ENCODE measurements at regions of chr1 and their contacts with region 1.

Region 1: DNA sequence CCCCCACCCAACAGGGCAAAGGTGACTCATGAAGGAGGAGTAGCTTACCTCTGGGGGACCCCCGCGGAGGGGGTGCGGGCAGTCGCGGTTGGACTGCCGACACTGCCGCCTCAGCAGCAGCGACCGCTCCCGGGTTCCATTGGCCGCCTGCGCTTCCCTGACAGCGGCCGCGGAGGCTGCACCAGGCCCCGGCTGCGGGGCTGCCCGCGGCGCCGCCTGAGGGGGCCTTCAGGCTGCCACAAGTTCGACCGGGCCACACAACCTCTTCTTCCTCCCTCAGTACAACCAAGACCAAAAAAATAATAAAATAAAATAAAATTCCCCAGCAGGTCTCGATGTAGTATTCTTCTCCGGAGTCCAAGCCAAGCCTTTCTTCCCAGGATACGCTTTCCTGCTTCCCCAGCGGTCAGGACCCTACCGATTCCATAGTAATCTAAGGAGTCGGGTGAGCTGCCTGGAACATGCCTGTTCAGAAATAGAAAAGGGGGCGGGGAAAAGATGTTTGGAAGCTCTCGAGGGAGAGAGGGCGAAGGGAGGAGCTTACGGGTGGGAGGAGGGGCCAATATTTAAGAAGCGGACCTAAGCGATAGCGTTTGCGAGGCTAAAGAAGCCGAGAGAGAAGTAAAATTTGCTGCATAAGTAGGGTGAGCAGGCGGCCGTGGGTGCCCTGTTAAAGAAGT is at the start of gene PI4KB:
- DNase-seq: peak; percentile 72 to 97
- H3K4me3 ChIP-seq: peak within 1 kb of the TSS; percentile 62 to 74
- H3K27ac ChIP-seq: peak within 1 kb of the TSS; percentile 92 to 93
- H3K4me1 ChIP-seq: peaks cover 0 to 22% of the 10 kb centered on the region in 2 donors
- H3K27me3 ChIP-seq: no peaks in the 10 kb centered on the region
- CTCF ChIP-seq: no peak
- total RNA-seq, gene PI4KB: 94.8 TPM

Region 2: GRCh38 chr1:150906341-150906740 is 421.0 kb before region 1 on chr1:
- intact Hi-C with region 1: no loop called
- DNase-seq: no peak
- H3K4me3 ChIP-seq: no peak overlapping the region
- H3K27ac ChIP-seq: no peak overlapping the region
- H3K4me1 ChIP-seq: no peaks in the 10 kb centered on the region
- H3K27me3 ChIP-seq: no peaks in the 10 kb centered on the region
- CTCF ChIP-seq: no peak

Region 3: GRCh38 chr1:151311589-151312331 is 15.6 kb before region 1 on chr1:
- intact Hi-C with region 1: loop called (anchors 1 kb)
- DNase-seq: peak; percentile 81 to 96
- H3K4me3 ChIP-seq: no peak overlapping the region
- H3K27ac ChIP-seq: peak overlapping the region; percentile 79 to 85
- H3K4me1 ChIP-seq: peaks cover 9 to 38% of the 10 kb centered on the region in 2 donors
- H3K27me3 ChIP-seq: no peaks in the 10 kb centered on the region
- CTCF ChIP-seq: no peak

Measured in ascending aorta (tissue), 2 donors.